ENCODE measurements at regions of chr9 and their contacts with region 1.

Region 1: GRCh38 chr9:33076358-33077004 is at the start of gene SMU1:
- DNase-seq: peak; percentile 83 to 98 (median 96)
- ATAC-seq: peak; percentile 94 to 99 (median 98)
- H3K4me3 ChIP-seq: peak within 1 kb of the TSS; percentile 76 to 86
- H3K4me3 Mint-ChIP-seq: peak within 1 kb of the TSS; percentile 91 to 99 (median 97)
- H3K27ac ChIP-seq: peak within 1 kb of the TSS; percentile 86
- H3K27ac Mint-ChIP-seq: peak within 1 kb of the TSS; percentile 97 to 100
- H3K4me1 ChIP-seq: peaks cover 21 to 25% of the 10 kb centered on the region in 2 experiments
- H3K4me1 Mint-ChIP-seq: peaks cover 48 to 53% (median 50%) of the 10 kb centered on the region in 3 donors
- H3K27me3 ChIP-seq: no peaks in the 10 kb centered on the region
- H3K27me3 Mint-ChIP-seq: no peaks in the 10 kb centered on the region
- total RNA-seq, gene SMU1: 22.6 to 25.5 (median 24.4) TPM

Region 2: GRCh38 chr9:32942755-32943460 is 133.6 kb before region 1 on chr9:
- CTCF ChIA-PET with region 1: no interaction called
- POLR2A ChIA-PET with region 1: no interaction called
- DNase-seq: no peak
- ATAC-seq: no peak
- H3K4me3 ChIP-seq: no peak overlapping the region
- H3K4me3 Mint-ChIP-seq: no peak overlapping the region
- H3K27ac ChIP-seq: no peak overlapping the region
- H3K27ac Mint-ChIP-seq: no peak overlapping the region
- H3K4me1 ChIP-seq: no peaks in the 10 kb centered on the region
- H3K4me1 Mint-ChIP-seq: no peaks in the 10 kb centered on the region
- H3K27me3 ChIP-seq: no peaks in the 10 kb centered on the region
- H3K27me3 Mint-ChIP-seq: peaks cover 0 to under 1% of the 10 kb centered on the region in 2 donors

Region 3: DNA sequence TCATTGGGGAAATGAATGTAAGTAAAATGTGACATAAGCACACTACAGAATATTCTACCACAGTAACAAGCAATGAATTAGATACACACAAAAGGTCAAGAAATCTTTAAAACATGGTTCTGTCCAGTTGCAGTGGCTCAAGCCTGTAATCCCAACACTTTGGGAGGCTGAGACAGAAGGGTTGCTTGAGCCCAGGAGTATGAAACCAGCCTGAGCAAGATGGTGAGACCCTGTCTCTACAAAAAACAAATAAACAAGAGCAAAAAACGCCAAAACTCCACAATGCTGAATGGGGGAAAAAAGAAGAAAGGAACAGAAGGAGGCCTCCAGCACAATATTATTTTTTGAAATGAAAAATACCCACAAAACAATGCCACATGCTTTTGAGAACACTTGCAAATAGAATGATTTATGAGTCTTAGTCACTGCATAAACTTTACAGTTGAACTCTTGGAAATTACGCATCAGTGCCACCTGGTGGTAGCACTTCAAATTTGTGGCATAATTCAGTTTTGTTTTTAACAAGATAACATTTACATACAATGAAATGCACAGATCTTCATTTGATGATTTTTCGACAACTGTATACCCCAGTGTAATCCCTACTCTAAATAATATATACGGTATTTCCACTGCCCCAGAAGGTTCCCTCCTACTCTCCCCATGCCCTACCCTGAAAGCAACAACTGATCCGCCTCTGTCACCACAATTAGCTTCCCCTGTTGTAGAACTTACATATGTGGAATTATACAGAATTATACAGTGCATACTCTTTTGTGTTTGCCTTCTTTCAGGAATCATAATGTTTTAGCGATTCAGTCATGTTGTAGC is 149.1 kb after region 1 on chr9:
- CTCF ChIA-PET with region 1: interaction called in 1 of 2 experiments, 11 read pairs
- POLR2A ChIA-PET with region 1: interaction called in 1 of 2 experiments, 3 read pairs
- DNase-seq: peak; percentile 28 to 86 (median 60)
- ATAC-seq: peak; percentile 50 to 70 (median 57)
- H3K4me3 ChIP-seq: no peak overlapping the region
- H3K4me3 Mint-ChIP-seq: no peak overlapping the region
- H3K27ac ChIP-seq: no peak overlapping the region
- H3K27ac Mint-ChIP-seq: no peak overlapping the region
- H3K4me1 ChIP-seq: peaks cover 4 to 16% of the 10 kb centered on the region in 2 experiments
- H3K4me1 Mint-ChIP-seq: peaks cover 17 to 20% (median 18%) of the 10 kb centered on the region in 3 donors
- H3K27me3 ChIP-seq: peaks cover 0 to 5% of the 10 kb centered on the region in 2 experiments
- H3K27me3 Mint-ChIP-seq: peaks cover 0 to 3% of the 10 kb centered on the region in 2 donors